Activated CD8-positive, alpha-beta T cell treated with anti-CD3 and anti-CD28 coated beads for 36 hours (primary cell): ENCODE measurements at regions of chr7 and their contacts with region 1.

Region 1: GRCh38 chr7:99928994-99929729 is at the start of gene GJC3:
- DNase-seq: peak; percentile 61
- ATAC-seq: peak; percentile 89
- H3K4me3 Mint-ChIP-seq: peak within 1 kb of the TSS; percentile 63
- H3K27ac Mint-ChIP-seq: no peak within 1 kb of the TSS
- H3K4me1 Mint-ChIP-seq: peaks cover 25% of the 10 kb centered on the region
- H3K27me3 Mint-ChIP-seq: peaks cover 9% of the 10 kb centered on the region
- CTCF ChIP-seq: peak; percentile 35
- total RNA-seq, gene GJC3: 0.41 to 0.47 TPM

Region 2: DNA sequence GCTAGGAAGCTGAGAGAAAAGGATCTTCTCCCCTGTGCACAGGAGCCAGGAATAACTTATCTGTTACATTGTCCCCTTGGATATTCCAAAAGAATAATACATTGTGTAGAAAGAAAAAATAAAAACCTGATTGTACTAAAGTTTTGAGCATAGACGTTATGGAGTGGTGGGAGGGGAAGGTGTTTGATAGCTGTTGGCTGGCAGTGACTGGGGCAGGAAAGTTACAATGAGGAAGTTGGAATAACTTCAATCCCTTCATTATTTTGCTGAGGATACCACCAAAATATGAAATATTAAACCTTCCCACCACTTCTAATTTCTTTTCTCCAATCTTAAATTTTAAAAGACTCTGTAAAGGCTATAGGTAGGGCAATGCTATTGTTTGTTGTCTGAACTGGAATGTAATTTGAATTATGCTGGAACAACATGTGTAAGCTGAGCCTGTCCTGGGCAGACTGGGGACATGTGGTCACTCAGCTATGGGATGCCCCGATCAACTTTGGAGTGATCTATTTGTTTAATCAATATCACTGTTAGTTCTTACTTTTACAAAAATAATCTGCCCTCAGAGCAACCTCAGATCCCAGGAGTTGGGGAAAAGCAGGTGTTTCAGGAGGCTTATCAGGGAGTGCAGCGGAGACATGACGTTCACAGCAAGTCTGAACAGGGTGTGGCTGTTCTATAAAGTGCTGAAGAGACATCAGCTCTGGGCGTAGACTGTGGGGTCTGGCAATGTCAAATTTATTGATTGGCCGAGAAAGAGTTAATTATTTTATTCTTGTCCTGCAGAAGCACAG is 80.5 kb before region 1 on chr7:
- CTCF ChIA-PET with region 1: no interaction called
- POLR2A ChIA-PET with region 1: no interaction called
- intact Hi-C with region 1: no loop called
- DNase-seq: no peak
- ATAC-seq: no peak
- H3K4me3 Mint-ChIP-seq: no peak overlapping the region
- H3K27ac Mint-ChIP-seq: no peak overlapping the region
- H3K4me1 Mint-ChIP-seq: no peaks in the 10 kb centered on the region
- H3K27me3 Mint-ChIP-seq: peaks cover 3% of the 10 kb centered on the region
- CTCF ChIP-seq: no peak

Region 3: DNA sequence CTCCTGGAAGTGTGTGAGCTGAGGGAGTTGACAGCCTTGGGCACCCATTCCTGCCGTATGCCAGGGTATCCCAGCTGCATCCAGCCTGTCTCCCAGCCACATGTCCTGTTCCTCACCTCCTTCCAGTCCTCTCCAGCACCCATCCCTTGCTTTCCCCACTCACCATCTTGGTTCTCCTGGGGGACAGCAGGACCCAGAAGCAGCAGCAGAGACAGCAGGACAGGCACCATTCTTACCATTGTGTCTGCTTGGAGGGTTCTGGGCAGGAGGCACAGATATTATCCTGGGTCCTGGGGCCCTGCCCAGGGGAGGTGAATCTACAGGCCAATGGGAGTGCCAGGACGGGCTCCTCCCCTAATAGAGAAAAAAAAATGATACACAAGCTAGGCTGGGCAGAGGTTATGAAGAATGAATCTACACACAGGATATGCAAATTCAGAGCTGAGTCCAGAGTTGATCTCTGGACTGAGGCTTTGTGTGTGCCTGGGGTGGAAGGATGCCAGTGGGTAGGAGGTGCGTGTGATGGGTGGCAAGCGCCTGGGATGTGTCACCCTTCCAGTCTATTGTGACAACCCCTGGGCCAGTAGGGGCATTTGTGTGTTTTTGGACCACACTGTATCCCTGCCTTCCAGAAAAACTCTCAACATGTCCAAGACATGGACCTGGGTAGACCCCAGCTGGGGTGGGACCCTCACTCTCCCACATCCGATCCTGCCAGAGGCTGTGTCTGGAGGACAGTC is 46.8 kb after region 1 on chr7 and contains the start of gene AZGP1:
- CTCF ChIA-PET with region 1: interaction called, 11 read pairs
- POLR2A ChIA-PET with region 1: no interaction called
- intact Hi-C with region 1: no loop called
- DNase-seq: no peak
- ATAC-seq: peak; percentile 18
- H3K4me3 Mint-ChIP-seq: no peak within 1 kb of the TSS
- H3K27ac Mint-ChIP-seq: no peak within 1 kb of the TSS
- H3K4me1 Mint-ChIP-seq: peaks cover 10% of the 10 kb centered on the region
- H3K27me3 Mint-ChIP-seq: peaks cover 5% of the 10 kb centered on the region
- CTCF ChIP-seq: no peak
- total RNA-seq, gene AZGP1: not detected

Region 4: DNA sequence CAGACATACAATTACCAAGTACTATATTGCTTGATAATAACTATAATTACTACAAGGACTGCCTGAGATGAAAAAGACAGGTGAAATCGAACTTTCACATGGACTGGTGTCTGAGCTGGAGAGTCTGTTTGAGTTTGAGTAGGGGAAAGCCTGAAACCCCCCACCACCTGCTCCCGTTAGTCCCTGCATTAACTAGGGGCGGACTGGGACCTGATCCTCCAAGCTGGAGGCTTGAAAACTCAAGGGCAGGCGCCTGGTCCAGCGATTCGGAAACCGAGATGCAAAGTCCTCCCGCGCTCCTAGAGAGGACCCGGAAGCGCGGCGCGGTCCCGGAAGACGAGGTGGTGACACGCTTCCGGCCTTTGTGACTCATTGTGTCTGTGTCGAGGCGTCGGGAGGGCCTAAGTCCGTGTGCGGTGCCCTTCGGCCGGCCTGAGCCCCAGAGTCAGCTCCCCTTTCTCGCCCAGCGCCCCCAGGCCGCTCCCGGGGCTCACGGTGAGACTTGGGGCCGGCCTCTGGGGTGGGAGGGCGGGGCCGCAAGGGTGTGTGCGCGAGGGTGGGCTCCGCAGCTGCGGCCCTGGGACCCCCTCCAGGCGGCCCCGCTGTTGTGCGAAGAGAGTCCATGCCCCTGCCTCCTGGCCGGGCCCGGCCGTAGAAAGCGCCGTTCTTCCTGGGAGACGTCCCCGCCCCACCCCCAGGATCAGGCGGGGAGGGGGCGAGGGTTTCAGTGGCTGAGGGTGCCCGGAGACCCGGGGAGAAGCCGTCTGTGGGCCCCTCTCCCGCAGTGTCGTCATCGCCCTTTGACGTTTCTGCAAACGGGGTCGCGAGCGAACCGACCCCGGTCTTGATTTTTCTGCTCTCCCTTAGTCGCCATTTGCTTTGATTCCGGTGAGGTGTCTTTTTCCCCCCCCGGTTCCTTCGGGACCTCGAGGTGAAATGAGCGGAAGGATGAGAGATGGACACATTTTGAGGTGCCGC is 86.4 kb after region 1 on chr7 and contains the start of gene ZKSCAN1:
- CTCF ChIA-PET with region 1: no interaction called
- POLR2A ChIA-PET with region 1: no interaction called
- intact Hi-C with region 1: no loop called
- DNase-seq: peak; percentile 90
- ATAC-seq: peak; percentile 94
- H3K4me3 Mint-ChIP-seq: peak within 1 kb of the TSS; percentile 95
- H3K27ac Mint-ChIP-seq: peak within 1 kb of the TSS; percentile 92
- H3K4me1 Mint-ChIP-seq: peaks cover 49% of the 10 kb centered on the region
- H3K27me3 Mint-ChIP-seq: no peaks in the 10 kb centered on the region
- CTCF ChIP-seq: no peak
- total RNA-seq, gene ZKSCAN1: 41.9 to 47.3 TPM